AG04449 (cell line): ENCODE measurements at regions of chr14 and their contacts with region 1.

Region 1: DNA sequence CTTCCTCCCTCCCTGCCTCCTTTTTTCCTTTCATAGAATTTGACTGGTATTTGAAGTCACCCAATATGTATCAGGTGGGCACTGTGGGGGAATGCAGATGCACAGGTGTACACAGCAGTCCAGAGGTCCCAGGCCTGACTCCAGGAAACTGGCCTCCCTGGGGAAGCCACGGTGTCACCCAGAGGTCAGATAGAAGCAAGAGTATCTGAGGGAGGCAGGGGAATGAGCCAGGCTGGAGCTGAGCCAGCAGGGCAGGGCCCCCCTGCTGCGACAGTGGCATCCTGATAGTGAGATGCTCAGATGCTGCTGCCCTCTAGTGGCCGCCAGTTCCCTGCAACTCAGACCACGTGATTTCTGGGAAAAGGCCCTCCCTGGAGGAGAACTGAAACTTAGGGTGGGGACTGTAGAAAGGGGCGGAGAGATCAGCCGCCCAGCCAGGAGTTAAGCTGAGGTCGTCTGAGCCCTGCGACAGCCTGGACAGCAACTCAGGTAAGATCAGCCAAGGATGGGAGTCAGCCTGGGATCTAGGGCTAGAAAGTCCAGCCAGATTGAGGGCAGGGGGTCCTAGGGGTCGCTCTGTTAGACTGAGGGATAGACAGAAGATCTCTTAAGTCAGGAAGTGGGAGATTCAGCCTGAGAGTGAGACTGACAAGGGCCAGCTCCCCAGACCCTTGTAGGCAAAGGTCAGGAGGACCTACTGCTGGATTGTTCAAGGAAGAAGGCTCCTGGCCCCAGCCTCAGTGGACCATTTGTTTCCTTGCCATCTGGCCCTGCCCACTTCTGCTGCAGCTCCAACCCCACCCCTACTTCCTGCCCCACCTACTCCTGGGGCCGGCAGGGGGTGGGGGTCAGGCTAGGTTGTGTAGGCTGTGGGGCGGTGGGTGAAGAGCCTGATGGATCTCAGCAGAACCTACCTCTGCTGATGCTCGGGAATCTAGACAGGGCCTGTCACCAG is at the start of gene IRF9:
- DNase-seq: peak; percentile 72
- H3K4me3 ChIP-seq: peak within 1 kb of the TSS; percentile 93
- CTCF ChIP-seq: peak; percentile 98

Region 2: GRCh38 chr14:24093901-24094761 is 67.0 kb before region 1 on chr14 and contains the start of gene PCK2:
- CTCF ChIA-PET with region 1: interaction called, 16 read pairs
- POLR2A ChIA-PET with region 1: interaction called, 13 read pairs
- DNase-seq: peak; percentile 63
- H3K4me3 ChIP-seq: peak within 1 kb of the TSS; percentile 87
- CTCF ChIP-seq: peak; percentile 9

Region 3: GRCh38 chr14:24114536-24115450 is 46.3 kb before region 1 on chr14 and contains the starts of genes DCAF11 and NRL:
- CTCF ChIA-PET with region 1: interaction called, 27 read pairs
- POLR2A ChIA-PET with region 1: interaction called, 6 read pairs
- DNase-seq: peak; percentile 99
- H3K4me3 ChIP-seq: peak within 1 kb of the TSS; percentile 96
- CTCF ChIP-seq: no peak

Region 4: GRCh38 chr14:24141097-24141880 is 19.8 kb before region 1 on chr14 and contains the start of gene EMC9:
- CTCF ChIA-PET with region 1: interaction called, 165 read pairs
- POLR2A ChIA-PET with region 1: interaction called, 9 read pairs
- DNase-seq: peak; percentile 94
- H3K4me3 ChIP-seq: peak within 1 kb of the TSS; percentile 97
- CTCF ChIP-seq: peak; percentile 56

Region 5: DNA sequence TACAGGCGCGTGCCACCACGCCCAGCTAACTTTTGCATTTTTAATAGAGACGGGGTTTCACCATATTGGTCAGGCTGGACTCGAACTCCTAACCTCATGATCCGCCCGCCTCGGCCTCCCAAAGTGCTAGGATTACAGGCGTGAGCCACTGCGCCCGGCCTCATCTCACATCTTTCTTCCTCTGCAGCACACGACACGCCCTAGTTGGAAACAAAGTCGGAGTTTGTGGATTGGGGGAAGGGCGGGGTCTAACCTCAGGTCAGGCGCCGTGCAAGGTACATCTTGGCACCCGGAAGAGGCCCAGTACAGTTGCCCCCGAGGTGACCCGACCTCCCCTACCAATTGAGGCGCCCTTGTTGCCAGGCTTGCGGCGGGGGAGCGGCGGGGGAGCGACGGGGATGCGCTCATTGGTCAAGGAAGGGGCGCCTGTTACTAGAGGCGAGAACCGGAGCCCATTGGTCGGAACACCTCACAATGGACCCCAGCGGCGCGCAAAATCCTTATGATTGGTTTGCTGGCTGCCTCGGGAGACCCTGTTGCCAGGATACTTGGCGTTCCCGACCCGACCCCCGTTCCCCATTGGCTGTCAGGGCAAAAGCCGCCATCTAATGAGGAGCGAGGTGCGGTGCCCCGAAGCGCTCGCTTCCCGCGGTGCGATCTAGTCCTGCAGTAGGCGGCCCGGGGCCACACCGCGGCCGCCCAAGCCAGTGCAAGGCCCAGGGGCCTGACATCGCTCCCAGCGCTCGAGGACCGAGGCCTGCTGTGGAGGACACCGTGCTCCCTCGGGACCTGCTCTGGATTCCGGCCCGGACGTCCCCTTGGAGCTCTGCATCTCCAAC is 10.5 kb after region 1 on chr14 and contains the start of gene REC8:
- CTCF ChIA-PET with region 1: interaction called, 23 read pairs
- POLR2A ChIA-PET with region 1: interaction called, 6 read pairs
- DNase-seq: no peak
- H3K4me3 ChIP-seq: peak within 1 kb of the TSS; percentile 45
- CTCF ChIP-seq: no peak

Region 6: DNA sequence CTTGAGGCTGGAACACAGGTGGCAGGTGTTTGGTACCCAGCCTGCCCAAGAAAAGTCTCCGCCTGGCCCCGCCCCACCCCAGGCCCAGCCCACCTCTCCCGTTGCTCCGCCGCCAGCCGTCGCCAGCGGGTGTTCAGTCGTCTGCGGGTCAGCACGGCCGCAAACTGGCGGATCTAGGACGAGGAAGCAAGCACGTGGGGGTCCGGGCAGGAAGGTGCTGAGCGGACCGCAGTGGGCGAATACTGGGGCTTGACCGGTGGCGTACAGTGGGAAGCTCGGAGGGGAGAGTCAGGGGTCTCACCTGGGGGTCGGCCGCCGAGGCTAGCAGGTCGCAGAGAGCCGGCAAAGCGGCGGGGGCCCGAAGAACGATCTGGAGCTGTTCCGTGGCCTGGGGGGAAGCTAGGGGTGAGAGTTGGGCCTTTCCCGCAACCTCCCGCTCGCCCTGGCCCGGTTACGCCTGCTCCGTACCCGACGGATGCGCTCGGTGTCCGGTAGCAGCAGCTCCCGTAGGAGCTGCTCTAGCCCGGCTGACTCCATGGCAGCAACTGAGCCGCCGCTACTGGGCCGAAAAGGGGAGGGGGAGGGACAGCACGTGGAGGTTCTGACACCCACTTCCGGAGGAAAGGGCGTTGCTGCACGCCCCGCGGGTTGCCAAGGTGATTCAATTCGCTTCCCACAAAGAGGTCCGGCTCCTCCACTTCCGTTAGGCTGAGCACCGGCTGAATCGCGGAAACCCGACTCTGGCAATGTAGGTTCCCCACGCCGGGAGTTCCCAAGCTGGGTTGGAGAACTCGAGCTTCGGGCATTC is 27.3 kb after region 1 on chr14 and contains the start of gene IPO4:
- CTCF ChIA-PET with region 1: interaction called, 60 read pairs
- POLR2A ChIA-PET with region 1: interaction called, 3 read pairs
- DNase-seq: peak; percentile 90
- H3K4me3 ChIP-seq: peak within 1 kb of the TSS; percentile 84
- CTCF ChIP-seq: no peak